ENCODE measurements at regions of chr6 and their contacts with region 1.

Region 1: GRCh38 chr6:44172731-44173500 is 14.3 kb downstream of the CAPN11 start:
- DNase-seq: peak; percentile 89
- CTCF ChIP-seq: peak; percentile 95

Region 2: DNA sequence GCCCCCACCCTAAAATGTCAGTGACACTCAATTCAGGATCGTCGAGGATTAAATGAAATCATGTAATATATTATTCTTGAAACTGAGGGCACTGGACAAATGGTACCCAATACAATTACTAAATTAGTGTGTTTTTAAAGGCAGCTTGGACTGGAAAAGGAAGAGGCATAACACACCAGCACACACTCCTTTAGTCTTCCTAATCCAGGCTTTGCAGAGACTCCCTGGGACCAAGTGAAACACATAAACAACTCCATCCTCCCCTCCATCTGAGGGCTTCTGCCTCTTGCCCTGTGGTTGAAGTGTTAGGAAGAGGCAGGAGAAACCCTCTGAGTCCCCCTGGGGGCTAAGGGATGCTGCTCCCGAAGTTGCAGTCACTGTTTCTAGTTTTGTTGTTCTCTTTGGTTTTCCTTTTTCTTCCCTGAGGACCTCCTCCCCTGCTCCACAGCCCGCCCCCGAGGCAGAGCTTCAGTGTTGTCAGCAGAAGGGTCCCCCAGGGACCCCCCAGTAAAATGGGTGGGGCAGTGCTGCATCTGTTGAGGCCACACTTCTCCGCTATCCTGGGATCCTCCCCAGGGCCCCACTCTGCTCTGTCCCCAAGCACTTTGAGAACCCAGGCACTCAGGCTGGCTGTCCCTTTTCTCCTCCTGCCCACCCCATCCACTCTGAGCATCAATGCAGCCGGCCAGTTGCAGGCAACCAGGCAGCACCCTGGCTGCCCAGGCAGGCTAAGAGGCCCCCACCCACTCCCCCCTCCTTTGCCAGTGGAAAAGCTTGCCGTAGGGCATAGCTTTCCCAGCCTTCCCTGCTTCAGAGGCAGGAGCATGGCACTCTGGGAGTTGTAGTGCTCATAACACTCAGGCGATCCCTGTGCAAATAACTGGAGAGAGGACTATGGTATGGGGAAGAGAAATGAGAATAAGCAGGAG is 39.6 kb before region 1 on chr6:
- CTCF ChIA-PET with region 1: interaction called, 17 read pairs
- POLR2A ChIA-PET with region 1: no interaction called
- DNase-seq: no peak
- CTCF ChIP-seq: no peak

Region 3: GRCh38 chr6:44185953-44186634 is 13.2 kb after region 1 on chr6:
- CTCF ChIA-PET with region 1: interaction called, 27 read pairs
- POLR2A ChIA-PET with region 1: no interaction called
- DNase-seq: peak; percentile 18
- CTCF ChIP-seq: no peak

Region 4: GRCh38 chr6:44201638-44202303 is 28.9 kb after region 1 on chr6:
- CTCF ChIA-PET with region 1: interaction called, 21 read pairs
- POLR2A ChIA-PET with region 1: no interaction called
- DNase-seq: no peak
- CTCF ChIP-seq: no peak

Region 5: DNA sequence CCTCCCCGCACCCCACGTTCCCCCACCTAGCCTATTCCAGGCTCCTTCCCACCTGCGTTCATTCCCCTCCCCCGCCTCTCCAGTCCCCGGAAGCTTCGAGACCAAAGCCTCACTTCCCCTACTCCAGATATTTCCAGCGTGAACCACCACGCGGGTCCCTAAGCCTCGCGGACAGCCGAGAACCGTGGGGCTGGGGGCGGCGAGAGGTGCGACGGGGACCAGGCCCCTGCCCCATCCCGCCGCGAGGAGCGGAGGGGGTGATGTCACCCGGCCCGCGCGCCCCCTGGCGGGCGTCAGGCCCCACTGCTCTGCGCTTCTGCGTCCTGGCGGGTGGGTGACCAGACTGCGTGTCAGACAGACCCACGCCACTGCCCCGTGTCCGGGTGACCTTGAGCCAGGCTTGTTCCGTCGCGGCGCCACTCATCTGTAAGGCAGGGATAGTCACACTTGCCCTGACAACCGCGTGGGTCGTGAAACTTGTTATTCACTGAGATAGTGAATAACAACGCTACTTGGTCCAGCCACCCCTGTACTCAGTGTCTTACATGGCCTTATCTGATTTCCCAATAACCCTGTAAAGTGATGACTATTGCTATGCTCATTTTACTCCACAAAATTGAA is 65.0 kb after region 1 on chr6:
- CTCF ChIA-PET with region 1: interaction called, 35 read pairs
- POLR2A ChIA-PET with region 1: interaction called, 4 read pairs
- DNase-seq: peak; percentile 87
- CTCF ChIP-seq: peak; percentile 95

Region 6: DNA sequence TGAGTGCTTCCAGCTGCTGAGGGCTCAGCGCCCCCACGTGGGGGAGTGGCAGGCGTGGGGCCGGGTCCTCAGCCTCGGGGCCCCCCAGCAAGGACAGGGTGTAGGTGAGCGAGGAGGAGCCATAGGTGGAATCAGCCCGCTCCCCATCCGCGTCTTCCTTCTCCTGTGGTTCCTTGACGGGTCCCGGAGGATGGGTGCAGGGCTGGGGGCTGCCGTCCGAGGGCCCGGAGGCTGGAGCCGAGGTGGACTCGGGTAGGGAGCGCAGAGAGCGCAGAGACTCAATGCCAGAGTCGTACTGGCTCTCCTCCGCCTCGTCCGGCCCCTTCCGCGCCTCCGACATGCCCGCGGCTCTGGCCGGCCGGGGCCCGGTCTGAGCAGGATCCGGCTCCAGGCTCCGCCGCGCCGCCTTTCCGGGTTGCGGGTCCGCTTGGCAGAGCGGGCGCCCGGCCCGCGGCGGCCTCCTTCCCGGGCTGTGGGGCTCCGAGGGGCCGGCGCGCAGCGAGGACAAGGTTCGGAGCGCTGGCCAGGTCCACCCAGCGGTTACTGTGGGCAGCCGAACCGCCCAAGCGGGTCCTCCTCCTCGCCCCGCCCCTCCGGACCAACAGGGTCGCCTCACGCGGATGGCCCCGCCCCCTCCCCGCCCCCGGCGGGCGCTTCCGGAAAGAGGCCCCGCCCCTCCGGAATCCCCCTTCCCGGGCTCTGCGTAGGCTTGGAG is 92.2 kb after region 1 on chr6 and contains the start of gene NFKBIE:
- CTCF ChIA-PET with region 1: interaction called, 10 read pairs
- POLR2A ChIA-PET with region 1: no interaction called
- DNase-seq: peak; percentile 94
- CTCF ChIP-seq: peak; percentile 73

Region 7: DNA sequence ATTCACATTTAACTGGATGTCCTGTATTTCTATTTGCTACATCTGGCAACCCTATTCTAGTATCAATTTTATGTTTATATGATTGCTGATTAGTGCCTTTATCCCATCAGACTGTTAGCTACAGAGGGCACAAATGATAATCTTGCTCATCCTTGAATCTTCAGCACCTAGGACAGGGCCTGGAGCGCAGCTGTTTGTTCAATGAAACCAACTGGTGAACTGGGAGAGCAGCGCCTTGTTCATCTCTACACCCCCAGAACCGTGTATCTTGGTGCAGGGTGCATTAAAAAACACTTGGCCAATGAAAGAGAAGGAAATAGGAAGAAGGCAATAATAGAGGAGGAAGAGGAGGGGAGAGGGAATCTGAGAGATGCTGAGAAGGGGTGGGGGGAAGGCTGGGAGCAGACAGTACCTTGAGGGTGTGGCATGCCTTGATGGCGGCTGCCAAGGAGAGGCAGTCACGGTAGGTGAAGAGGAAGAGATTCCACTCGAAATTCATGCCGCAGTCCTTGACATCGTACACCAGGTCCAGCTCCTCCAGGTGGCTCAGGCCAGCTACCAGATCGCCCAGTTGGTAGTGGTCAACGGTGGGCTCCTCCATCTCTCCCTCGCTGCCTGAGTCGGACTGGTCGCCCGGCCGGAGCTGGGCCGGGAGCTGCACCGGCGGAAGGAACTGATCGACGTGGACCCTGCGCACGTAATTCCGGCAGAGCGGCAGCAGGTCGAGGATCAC is 112.8 kb after region 1 on chr6:
- CTCF ChIA-PET with region 1: no interaction called
- POLR2A ChIA-PET with region 1: no interaction called
- DNase-seq: no peak
- CTCF ChIP-seq: no peak

Region 8: GRCh38 chr6:44388134-44388486 is 215.2 kb after region 1 on chr6:
- CTCF ChIA-PET with region 1: no interaction called
- POLR2A ChIA-PET with region 1: no interaction called
- DNase-seq: no peak
- CTCF ChIP-seq: no peak

Measured in GM10248 (cell line).